A549 (cell line): ENCODE measurements at regions of chr17 and their contacts with region 1.

Region 1: DNA sequence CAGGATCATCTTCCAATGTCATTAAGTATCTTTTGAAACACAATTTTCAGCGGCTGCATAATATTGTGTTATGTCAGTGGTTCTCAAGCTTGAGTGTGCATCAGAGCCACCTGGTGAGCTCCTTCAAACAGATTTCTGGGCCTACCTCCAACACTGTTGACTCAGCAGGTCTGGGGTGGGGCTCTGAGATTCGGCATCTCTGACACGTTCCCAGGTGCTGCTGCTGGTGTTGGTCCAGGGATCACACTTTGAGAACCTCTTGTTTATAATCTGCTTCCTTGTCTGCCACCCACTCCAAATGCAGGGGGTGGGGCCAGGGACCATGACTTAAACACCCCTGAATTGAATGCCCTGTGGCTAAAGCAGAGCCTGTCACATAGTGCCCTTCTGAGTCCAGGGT is 73.8 kb upstream of the HNF1B start:
- DNase-seq: peak in 1 of 2 experiments; percentile 59
- ATAC-seq: peak; percentile 22 to 61; a peak in 5 of 6 replicates
- H3K4me3 ChIP-seq: no peak overlapping the region
- H3K27ac ChIP-seq: peak overlapping the region; percentile 41 to 86; a peak in 5 of 6 replicates
- H3K4me1 ChIP-seq: peaks cover 66% of the 10 kb centered on the region
- CTCF ChIP-seq: no peak
- EP300 ChIP-seq: no peak
- POLR2A ChIP-seq: no peak
- RAD21 ChIP-seq: no peak

Region 2: DNA sequence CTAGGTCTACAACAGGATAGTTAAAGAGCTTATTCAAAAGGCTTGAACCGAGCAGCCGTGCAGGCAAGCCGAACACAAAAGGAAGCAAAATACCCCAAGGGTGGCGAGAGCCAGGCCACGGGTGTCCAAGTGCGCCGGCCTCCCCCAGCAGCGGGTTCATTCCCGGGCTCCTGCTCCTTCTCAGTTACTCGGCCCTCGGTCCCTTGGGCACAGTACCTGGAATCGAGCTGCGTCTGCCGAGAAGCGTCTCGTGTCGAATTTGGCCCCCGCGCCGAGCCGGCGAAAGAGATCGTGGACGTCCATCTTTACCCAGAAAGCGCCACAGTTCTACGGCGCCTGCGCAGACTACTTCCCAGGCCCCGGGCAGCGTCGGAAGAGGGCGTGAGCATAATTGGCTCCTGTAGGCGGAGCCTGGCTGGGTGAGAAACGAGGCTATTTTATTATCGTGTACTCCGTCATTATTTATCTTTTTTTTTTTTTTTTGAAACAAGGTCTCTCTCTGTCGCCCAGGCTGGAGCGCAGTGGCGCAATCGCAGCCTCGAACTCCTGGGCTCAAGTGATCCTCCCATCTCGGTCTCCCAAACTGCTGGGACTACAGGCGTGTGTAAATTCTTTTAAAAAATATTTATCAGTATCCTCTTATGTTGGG is 175.4 kb before region 1 on chr17 and contains the start of gene DDX52:
- CTCF ChIA-PET with region 1: interaction called, 153 read pairs
- POLR2A ChIA-PET with region 1: no interaction called
- DNase-seq: peak; percentile 93 to 97
- ATAC-seq: peak; percentile 98
- H3K4me3 ChIP-seq: peak within 1 kb of the TSS; percentile 74
- H3K27ac ChIP-seq: peak within 1 kb of the TSS; percentile 86 to 92
- H3K4me1 ChIP-seq: peaks cover 26% of the 10 kb centered on the region
- CTCF ChIP-seq: no peak
- EP300 ChIP-seq: no peak
- POLR2A ChIP-seq: peak; percentile 89
- RAD21 ChIP-seq: no peak
- polyA plus RNA-seq, gene DDX52: 47.9 and 59.6 TPM in 2 replicates

Region 3: DNA sequence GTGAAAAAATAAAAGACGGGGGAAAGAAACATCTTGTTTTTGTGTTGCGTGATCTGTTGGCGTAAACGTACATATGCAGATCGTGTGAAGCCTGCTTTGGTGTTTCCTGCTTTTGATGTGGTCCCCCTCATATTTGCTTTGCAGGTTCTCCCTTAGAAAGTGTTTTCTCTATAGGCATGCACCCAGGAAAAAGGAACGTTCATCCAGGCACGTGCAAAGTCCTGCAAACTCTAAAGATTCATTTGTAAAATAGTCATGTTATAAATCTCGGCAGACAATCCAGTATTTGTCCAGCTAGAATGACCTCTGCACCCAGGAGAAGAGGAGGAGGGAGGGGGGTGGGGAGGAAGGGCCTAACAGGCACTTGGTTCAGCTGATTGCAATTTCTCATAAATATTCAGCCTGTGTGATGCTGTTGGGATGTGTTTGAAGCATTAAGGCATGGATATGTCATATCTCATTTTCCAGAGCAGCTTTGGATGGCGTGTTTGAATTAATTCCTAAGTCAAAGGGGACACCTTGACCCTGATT is 135.2 kb before region 1 on chr17:
- CTCF ChIA-PET with region 1: interaction called, 10 read pairs
- POLR2A ChIA-PET with region 1: no interaction called
- DNase-seq: no peak
- ATAC-seq: no peak
- H3K4me3 ChIP-seq: no peak overlapping the region
- H3K27ac ChIP-seq: no peak overlapping the region
- H3K4me1 ChIP-seq: peaks cover 7% of the 10 kb centered on the region; the same call in 2 of the 3 replicates
- CTCF ChIP-seq: no peak
- EP300 ChIP-seq: no peak
- POLR2A ChIP-seq: no peak
- RAD21 ChIP-seq: no peak

Region 4: DNA sequence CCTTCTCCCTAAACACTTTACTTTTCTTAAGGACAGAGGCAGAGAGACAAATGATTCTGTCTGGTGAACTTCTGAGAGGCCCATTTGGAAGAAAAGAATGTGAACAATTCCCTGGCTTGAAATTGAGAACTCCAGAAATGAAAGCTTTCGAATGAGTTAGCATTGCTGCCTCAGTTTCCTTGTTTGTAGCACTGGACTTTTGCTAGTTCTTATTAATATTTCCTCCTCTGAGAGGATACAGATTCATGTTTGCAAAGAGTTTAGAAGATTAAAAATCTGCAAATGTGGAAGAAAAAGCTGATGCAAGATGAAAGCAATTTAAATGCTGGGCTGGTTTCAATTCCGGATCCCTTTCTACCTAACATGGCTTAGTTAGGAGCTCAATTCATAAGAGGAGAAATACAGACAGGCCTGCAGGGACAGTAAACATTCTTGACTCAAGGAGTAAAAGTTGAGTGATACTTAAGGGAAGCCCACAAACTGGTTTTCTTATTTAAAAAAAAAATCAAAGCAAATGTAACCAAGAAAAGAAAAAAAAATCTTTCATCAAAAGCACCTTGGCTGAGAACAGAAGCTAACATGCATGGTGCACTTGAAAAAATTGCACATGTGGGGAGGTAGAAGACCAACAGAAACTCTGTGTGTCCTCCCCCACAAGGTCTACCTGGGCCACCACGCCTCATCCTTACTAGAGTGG is 100.9 kb before region 1 on chr17:
- CTCF ChIA-PET with region 1: interaction called, 45 read pairs
- POLR2A ChIA-PET with region 1: no interaction called
- DNase-seq: no peak
- ATAC-seq: no peak
- H3K4me3 ChIP-seq: peak overlapping the region; percentile 22
- H3K27ac ChIP-seq: peak overlapping the region; percentile 89 to 95
- H3K4me1 ChIP-seq: peaks cover 74% of the 10 kb centered on the region
- CTCF ChIP-seq: no peak
- EP300 ChIP-seq: no peak
- POLR2A ChIP-seq: no peak
- RAD21 ChIP-seq: no peak

Region 5: GRCh38 chr17:37744961-37745800 is 73.5 kb before region 1 on chr17 and contains the start of gene HNF1B:
- CTCF ChIA-PET with region 1: interaction called, 137 read pairs
- POLR2A ChIA-PET with region 1: interaction called, 20 read pairs
- DNase-seq: peak; percentile 68 to 76
- ATAC-seq: peak; percentile 40 to 50
- H3K4me3 ChIP-seq: peak within 1 kb of the TSS; percentile 67
- H3K27ac ChIP-seq: peak within 1 kb of the TSS; percentile 81 to 94
- H3K4me1 ChIP-seq: peaks cover 23% of the 10 kb centered on the region
- CTCF ChIP-seq: peak; percentile 48
- EP300 ChIP-seq: no peak
- POLR2A ChIP-seq: peak; percentile 60
- RAD21 ChIP-seq: peak; percentile 55 to 59; a peak in 4 of 5 replicates
- polyA plus RNA-seq, gene HNF1B: 13.3 and 17.0 TPM in 2 replicates

Region 6: GRCh38 chr17:37791447-37792399 is 27.0 kb before region 1 on chr17:
- CTCF ChIA-PET with region 1: interaction called, 29 read pairs
- POLR2A ChIA-PET with region 1: no interaction called
- DNase-seq: peak; percentile 35 to 80
- ATAC-seq: peak in 1 of 2 experiments; percentile 67; a peak in 3 of 6 replicates
- H3K4me3 ChIP-seq: no peak overlapping the region
- H3K27ac ChIP-seq: peak overlapping the region in 1 of 2 experiments; percentile 21; a peak in 2 of 6 replicates
- H3K4me1 ChIP-seq: peaks cover 29% of the 10 kb centered on the region
- CTCF ChIP-seq: peak; percentile 83
- EP300 ChIP-seq: no peak
- POLR2A ChIP-seq: no peak
- RAD21 ChIP-seq: peak; percentile 72 to 79

Region 7: DNA sequence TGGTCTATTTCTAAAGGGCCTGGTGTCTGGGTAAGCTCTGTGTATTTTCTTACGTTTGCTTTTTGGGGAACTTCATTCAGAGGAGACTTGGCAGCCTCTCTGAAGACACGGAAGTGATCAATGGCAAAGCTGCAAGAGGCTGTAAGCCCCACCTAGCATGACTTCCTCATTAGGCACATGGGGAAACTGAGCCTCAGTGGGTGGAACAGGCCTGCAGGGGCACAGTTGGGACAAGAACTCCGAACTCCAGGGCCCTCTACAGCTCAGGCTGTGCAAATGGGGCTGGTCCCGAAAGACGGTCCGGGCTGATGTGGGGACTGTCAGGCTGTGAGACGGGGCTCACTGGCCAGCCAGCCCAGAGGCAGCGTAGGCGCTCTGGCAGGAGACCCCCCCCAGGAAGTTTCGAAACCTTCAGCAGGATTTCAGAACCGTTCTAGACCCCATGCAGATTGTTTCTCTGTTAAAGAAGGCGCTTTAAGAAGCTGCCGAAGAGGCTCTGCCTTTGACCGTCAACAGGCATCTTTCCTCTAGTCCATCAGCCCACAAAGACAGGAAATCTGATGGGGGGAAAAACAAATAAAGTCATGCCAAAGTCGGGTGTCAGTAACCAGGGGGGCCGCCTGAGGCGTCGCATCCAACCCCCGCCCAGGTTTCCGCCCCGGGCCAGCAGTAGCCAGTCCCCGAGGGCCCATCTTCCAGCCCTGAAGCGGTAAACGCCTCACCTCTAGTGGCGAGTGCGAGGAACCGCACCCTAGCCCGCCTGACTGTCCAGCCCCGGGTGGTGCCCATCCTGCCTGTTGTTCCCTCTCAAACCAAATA is 25.7 kb after region 1 on chr17:
- CTCF ChIA-PET with region 1: interaction called, 48 read pairs
- POLR2A ChIA-PET with region 1: no interaction called
- DNase-seq: peak; percentile 71 to 87
- ATAC-seq: peak; percentile 96 to 99
- H3K4me3 ChIP-seq: no peak overlapping the region
- H3K27ac ChIP-seq: peak overlapping the region in 1 of 2 experiments; percentile 24; a peak in 3 of 6 replicates
- H3K4me1 ChIP-seq: peaks cover 16% of the 10 kb centered on the region; the same call in 2 of the 3 replicates
- CTCF ChIP-seq: peak; percentile 82
- EP300 ChIP-seq: no peak
- POLR2A ChIP-seq: no peak
- RAD21 ChIP-seq: peak; percentile 90 to 93